H1 (cell line): ENCODE measurements at regions of chr1 and their contacts with region 1.

Region 1: DNA sequence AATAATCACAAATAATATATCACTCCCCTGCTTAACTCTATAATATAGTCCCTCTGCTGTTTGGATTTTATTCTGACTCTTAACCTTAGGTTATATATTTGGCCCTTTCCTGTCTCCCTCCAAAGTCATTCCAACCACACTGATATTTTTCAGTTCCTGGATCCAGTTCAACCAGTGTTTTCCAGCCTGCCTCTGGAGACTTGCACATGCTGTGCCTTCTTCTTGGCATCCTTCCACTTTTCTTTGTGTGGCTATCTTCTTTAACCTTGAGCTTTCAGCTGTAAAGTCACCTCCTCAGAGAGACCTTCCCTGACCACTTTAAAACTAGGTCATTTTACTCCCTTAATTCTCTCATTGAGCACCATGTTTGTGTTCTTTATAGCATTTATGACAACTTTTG is 19.4 kb downstream of the CERS2 start:
- DNase-seq: no peak
- H3K4me3 ChIP-seq: no peak overlapping the region
- H3K27ac ChIP-seq: no peak overlapping the region
- H3K4me1 ChIP-seq: no peaks in the 10 kb centered on the region
- H3K27me3 ChIP-seq: no peaks in the 10 kb centered on the region
- CTCF ChIP-seq: no peak
- EP300 ChIP-seq: no peak
- POLR2A ChIP-seq: no peak
- RAD21 ChIP-seq: no peak

Region 2: DNA sequence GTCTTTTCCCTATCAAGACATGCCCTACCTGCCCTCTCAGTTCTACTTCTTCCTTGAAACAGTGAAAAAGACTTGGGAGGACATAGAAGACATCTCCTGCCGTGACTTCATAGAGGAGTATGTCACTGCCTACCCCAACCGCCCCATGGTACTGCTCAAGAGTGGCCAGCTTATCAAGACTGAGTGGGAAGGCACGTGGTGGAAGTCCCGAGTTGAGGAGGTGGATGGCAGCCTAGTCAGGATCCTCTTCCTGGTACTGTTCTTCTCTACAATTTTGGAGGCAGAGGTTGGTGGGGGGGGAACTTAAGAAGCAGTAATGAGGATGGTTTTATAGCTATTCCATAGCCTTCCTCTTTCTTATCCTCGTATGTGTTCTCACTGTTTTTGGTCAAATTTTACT is 10.4 kb before region 1 on chr1:
- CTCF ChIA-PET with region 1: interaction called, 5 read pairs
- POLR2A ChIA-PET with region 1: interaction called, 15 read pairs
- DNase-seq: no peak
- H3K4me3 ChIP-seq: no peak overlapping the region
- H3K27ac ChIP-seq: no peak overlapping the region
- H3K4me1 ChIP-seq: no peaks in the 10 kb centered on the region
- H3K27me3 ChIP-seq: no peaks in the 10 kb centered on the region
- CTCF ChIP-seq: no peak
- EP300 ChIP-seq: no peak
- POLR2A ChIP-seq: no peak
- RAD21 ChIP-seq: no peak

Region 3: DNA sequence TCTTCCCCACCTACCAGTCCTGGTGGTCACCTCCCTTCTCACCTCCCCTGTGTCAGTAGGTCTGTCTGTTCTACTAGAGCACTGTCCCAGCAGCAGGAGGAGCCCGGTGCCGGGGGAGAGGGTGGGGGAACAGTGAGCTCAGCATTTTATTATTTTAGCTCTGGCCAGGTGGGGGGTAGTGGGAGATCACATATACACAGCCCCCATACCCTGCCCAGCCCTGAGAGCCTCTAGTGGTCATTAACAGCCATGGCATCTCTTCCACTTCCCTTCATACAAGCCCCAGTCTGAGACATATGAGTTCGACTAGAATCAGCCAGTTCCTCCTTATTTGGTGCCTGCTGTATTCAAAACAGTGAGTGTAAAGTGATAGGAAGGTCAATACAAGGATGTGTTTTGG is 220.6 kb after region 1 on chr1 and contains the start of gene TMOD4:
- CTCF ChIA-PET with region 1: no interaction called
- POLR2A ChIA-PET with region 1: no interaction called
- DNase-seq: no peak
- H3K4me3 ChIP-seq: no peak within 1 kb of the TSS
- H3K27ac ChIP-seq: no peak within 1 kb of the TSS
- H3K4me1 ChIP-seq: no peaks in the 10 kb centered on the region
- H3K27me3 ChIP-seq: no peaks in the 10 kb centered on the region
- CTCF ChIP-seq: peak; percentile 37 to 67 (median 47)
- EP300 ChIP-seq: no peak
- POLR2A ChIP-seq: no peak
- RAD21 ChIP-seq: peak; percentile 15 to 31; a peak in 1 of 4 replicates
- total RNA-seq, gene TMOD4: not detected in 2 replicates